ENCODE measurements at regions of chr11 and their contacts with region 1.

Region 1: GRCh38 chr11:35617687-35618496 is at the start of gene FJX1:
- DNase-seq: no peak
- H3K4me3 ChIP-seq: peak within 1 kb of the TSS; percentile 58 to 77 (median 70)
- H3K27ac ChIP-seq: peak within 1 kb of the TSS; percentile 73 to 83 (median 76)
- H3K4me1 ChIP-seq: peaks cover 19 to 34% (median 33%) of the 10 kb centered on the region in 4 donors
- H3K27me3 ChIP-seq: peaks cover 0 to 27% (median 0%) of the 10 kb centered on the region in 4 donors
- CTCF ChIP-seq: no peak
- EP300 ChIP-seq: no peak
- POLR2A ChIP-seq: no peak
- total RNA-seq, gene FJX1: 2.1 to 18.1 (median 6.5) TPM

Region 2: GRCh38 chr11:35662649-35663407 is 44.9 kb after region 1 on chr11 and contains the start of gene TRIM44:
- intact Hi-C with region 1: loop called (anchors 5 kb)
- DNase-seq: peak; percentile 96
- H3K4me3 ChIP-seq: peak within 1 kb of the TSS; percentile 67 to 92 (median 84)
- H3K27ac ChIP-seq: peak within 1 kb of the TSS; percentile 86 to 98 (median 94)
- H3K4me1 ChIP-seq: peaks cover 16 to 32% (median 28%) of the 10 kb centered on the region in 4 donors
- H3K27me3 ChIP-seq: peaks cover 0 to 2% (median 0%) of the 10 kb centered on the region in 4 donors
- CTCF ChIP-seq: peak in 1 of 3 experiments; percentile 13
- EP300 ChIP-seq: no peak
- POLR2A ChIP-seq: no peak
- total RNA-seq, gene TRIM44: 27.4 to 73.4 (median 53.7) TPM

Region 3: DNA sequence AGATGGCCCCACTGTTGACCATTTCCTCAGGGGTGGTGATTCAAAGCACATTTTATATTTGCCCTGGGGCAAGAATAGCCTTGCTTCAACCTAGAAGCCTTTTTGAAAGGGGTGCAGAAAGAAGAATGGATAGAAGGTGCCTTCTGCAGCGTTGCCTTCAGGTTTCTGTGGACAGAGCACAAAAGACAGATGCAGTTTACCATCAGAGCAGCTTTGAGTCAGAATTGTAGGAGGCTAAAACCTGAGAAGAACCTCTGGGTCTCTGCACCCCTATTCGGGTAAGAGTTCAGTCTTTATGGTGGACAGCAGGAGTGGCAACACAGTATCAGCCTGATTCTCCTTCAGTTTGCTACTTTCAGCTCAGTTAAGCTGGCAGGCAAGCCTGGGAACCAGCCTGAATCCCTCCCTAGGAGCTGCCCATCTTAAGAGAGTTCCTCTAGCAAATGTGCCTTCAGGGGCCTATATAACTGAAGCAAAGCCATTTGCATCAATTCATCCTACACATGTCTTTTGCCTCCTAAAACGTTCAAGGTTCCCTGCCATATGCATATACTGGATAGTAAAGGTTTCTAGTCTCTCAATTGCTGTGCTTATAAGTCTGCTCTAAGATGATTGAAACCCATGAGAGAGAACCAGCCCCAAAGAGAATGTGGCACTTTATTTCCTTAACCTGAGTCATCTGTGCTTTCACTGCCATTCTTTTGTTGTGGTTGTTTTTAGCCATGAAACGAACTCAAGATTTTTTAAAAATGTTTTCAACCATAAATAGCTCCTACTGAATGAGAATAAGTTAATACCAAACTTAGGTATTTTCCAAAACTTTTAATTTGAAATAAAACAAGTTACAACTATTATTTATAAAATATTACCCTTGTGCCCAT is 167.6 kb after region 1 on chr11:
- intact Hi-C with region 1: no loop called
- DNase-seq: no peak
- H3K4me3 ChIP-seq: no peak overlapping the region
- H3K27ac ChIP-seq: no peak overlapping the region
- H3K4me1 ChIP-seq: peaks cover 19 to 36% (median 26%) of the 10 kb centered on the region in 4 donors
- H3K27me3 ChIP-seq: no peaks in the 10 kb centered on the region
- CTCF ChIP-seq: no peak
- EP300 ChIP-seq: no peak
- POLR2A ChIP-seq: no peak

Region 4: GRCh38 chr11:35822815-35823495 is 205.1 kb after region 1 on chr11:
- intact Hi-C with region 1: loop called (anchors 5 kb)
- DNase-seq: no peak
- H3K4me3 ChIP-seq: no peak overlapping the region
- H3K27ac ChIP-seq: no peak overlapping the region
- H3K4me1 ChIP-seq: peaks cover 12 to 15% (median 12%) of the 10 kb centered on the region in 4 donors
- H3K27me3 ChIP-seq: no peaks in the 10 kb centered on the region
- CTCF ChIP-seq: no peak
- EP300 ChIP-seq: no peak
- POLR2A ChIP-seq: no peak

Region 5: GRCh38 chr11:35943713-35944655 is 326.1 kb after region 1 on chr11 and contains the start of gene LDLRAD3:
- intact Hi-C with region 1: loop called (anchors 10 kb)
- DNase-seq: no peak
- H3K4me3 ChIP-seq: peak within 1 kb of the TSS; percentile 64 to 86 (median 68)
- H3K27ac ChIP-seq: peak within 1 kb of the TSS; percentile 69 to 76 (median 72)
- H3K4me1 ChIP-seq: peaks cover 3 to 25% (median 19%) of the 10 kb centered on the region in 4 donors
- H3K27me3 ChIP-seq: no peaks in the 10 kb centered on the region
- CTCF ChIP-seq: no peak
- EP300 ChIP-seq: no peak
- POLR2A ChIP-seq: no peak
- total RNA-seq, gene LDLRAD3: 6.8 to 8.7 (median 8.2) TPM

Region 6: DNA sequence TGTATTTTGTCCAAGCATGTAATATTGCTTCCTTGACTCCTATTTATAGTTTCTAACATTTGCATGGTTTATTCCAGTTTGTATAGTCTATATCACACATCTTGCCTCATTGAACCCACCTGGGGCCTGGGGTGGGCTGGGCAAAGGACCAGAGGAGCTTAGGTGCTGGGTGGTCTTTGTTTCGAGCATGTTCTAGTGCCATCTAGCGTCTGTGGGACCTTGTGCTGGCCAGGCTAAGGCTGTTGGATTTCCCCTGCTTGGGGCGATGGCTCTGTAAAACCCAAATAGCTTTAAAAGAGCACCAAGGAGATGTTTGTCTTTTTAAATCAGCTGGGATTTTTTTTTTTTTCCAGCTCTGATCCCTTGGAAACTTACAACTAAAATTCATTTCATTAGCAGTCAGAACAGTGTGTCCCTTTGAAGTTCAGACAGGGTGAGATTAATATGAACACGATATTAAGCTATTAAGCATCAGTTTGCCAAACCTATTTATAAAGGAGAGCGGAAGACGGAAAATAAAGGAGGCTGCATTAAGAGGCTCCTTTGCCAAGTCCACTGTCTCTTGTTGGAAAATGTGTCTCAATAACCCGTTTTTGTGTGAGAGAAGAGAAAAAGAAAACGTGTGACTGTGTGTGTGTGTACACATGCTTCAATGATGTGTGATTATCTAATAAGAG is 514.0 kb after region 1 on chr11:
- intact Hi-C with region 1: loop called (anchors 2 kb)
- DNase-seq: no peak
- H3K4me3 ChIP-seq: no peak overlapping the region
- H3K27ac ChIP-seq: no peak overlapping the region
- H3K4me1 ChIP-seq: peaks cover 0 to 7% (median 3%) of the 10 kb centered on the region in 4 donors
- H3K27me3 ChIP-seq: no peaks in the 10 kb centered on the region
- CTCF ChIP-seq: peak; percentile 46 to 72 (median 58)
- EP300 ChIP-seq: no peak
- POLR2A ChIP-seq: no peak

Region 7: GRCh38 chr11:36265793-36266628 is 648.1 kb after region 1 on chr11:
- intact Hi-C with region 1: loop called (anchors 2 kb)
- DNase-seq: no peak
- H3K4me3 ChIP-seq: no peak overlapping the region
- H3K27ac ChIP-seq: no peak overlapping the region
- H3K4me1 ChIP-seq: peaks cover 0 to 3% (median 0%) of the 10 kb centered on the region in 4 donors
- H3K27me3 ChIP-seq: peaks cover 0 to 7% (median 0%) of the 10 kb centered on the region in 4 donors
- CTCF ChIP-seq: peak; percentile 70 to 80 (median 75)
- EP300 ChIP-seq: no peak
- POLR2A ChIP-seq: no peak

Region 8: GRCh38 chr11:36492724-36493304 is 874.9 kb after region 1 on chr11:
- intact Hi-C with region 1: loop called (anchors 10 kb)
- DNase-seq: no peak
- H3K4me3 ChIP-seq: no peak overlapping the region
- H3K27ac ChIP-seq: no peak overlapping the region
- H3K4me1 ChIP-seq: peaks cover 0 to 8% (median 3%) of the 10 kb centered on the region in 4 donors
- H3K27me3 ChIP-seq: no peaks in the 10 kb centered on the region
- CTCF ChIP-seq: peak; percentile 56 to 76 (median 64)
- EP300 ChIP-seq: no peak
- POLR2A ChIP-seq: no peak

Measured in esophagus muscularis mucosa (tissue), 4 donors.